Activated B cell treated with CpG ODN at 0.5 μM for 24 hours (primary cell): ENCODE measurements at regions of chr4 and their contacts with region 1.

Region 1: DNA sequence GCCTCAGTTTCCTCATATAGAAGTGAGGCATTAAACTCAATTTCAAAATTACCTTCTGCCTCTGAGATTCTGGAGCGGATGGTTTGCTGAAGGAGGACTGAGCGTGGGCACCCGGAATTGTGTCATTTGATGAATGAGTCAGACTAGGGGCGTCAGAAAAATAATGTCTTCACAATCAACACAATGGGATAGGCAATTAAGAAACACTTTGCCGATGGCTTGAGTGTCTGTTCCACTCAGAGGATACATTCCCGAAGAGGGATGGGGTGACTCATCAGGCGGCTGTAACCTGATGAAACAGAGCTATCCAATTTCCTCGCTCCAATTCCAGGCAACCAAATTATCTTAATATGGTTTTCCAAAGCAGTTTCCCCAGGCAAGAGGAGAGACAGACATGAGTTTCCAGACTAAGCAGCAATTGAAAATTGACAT is 1.2 kb upstream of the CHRNA9 start:
- DNase-seq: no peak
- ATAC-seq: no peak
- H3K4me3 Mint-ChIP-seq: no peak overlapping the region
- H3K27ac Mint-ChIP-seq: no peak overlapping the region
- H3K4me1 Mint-ChIP-seq: no peaks in the 10 kb centered on the region
- H3K27me3 Mint-ChIP-seq: peaks cover 5% of the 10 kb centered on the region
- CTCF ChIP-seq: no peak

Region 2: DNA sequence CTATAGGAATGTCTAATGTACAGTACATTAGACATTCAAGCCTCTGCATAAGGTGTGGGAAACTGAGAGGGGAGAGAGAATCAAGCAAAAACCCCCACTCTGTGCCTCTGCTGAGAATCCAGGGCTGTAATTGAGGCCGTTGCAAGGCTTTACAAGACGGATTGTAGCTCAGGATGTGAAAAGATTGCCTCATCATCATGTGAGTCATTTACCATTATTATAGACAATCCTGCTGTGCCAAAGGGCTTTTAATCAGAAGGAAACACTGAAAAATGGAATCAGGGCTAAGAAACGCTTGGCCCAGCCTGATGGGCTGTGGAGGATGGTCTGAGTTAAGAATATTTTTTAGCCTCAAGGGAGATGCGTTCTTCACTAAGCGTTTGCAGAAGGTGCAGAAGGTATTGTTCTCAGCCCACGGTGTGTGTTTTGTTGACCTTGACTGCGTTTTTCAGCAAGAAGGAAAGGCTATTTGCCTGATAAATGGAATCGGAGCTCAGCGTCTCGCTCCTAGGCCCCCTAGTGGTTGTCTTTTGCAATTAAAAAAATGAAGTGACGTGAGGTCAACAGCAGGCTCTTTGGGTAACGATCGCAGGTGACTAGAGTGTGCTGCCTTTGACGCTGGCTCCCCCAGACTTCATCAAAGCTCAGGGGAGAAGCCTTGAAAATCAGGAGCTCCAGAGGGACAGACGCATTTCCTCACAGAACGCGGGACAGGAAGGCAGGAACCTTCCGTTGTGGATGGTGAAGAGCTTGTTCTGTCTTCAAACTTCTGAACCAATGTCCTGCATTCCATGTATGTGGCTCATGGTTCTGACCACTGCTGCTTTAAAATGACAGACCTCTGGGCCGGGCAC is 16.9 kb before region 1 on chr4:
- CTCF ChIA-PET with region 1: interaction called, 5 read pairs
- POLR2A ChIA-PET with region 1: interaction called, 10 read pairs
- intact Hi-C with region 1: no loop called
- DNase-seq: peak; percentile 38
- ATAC-seq: peak; percentile 82
- H3K4me3 Mint-ChIP-seq: peak overlapping the region; percentile 84
- H3K27ac Mint-ChIP-seq: peak overlapping the region; percentile 87
- H3K4me1 Mint-ChIP-seq: peaks cover 28% of the 10 kb centered on the region
- H3K27me3 Mint-ChIP-seq: no peaks in the 10 kb centered on the region
- CTCF ChIP-seq: peak; percentile 48